ENCODE measurements at regions of chr3 and their contacts with region 1.

Region 1: DNA sequence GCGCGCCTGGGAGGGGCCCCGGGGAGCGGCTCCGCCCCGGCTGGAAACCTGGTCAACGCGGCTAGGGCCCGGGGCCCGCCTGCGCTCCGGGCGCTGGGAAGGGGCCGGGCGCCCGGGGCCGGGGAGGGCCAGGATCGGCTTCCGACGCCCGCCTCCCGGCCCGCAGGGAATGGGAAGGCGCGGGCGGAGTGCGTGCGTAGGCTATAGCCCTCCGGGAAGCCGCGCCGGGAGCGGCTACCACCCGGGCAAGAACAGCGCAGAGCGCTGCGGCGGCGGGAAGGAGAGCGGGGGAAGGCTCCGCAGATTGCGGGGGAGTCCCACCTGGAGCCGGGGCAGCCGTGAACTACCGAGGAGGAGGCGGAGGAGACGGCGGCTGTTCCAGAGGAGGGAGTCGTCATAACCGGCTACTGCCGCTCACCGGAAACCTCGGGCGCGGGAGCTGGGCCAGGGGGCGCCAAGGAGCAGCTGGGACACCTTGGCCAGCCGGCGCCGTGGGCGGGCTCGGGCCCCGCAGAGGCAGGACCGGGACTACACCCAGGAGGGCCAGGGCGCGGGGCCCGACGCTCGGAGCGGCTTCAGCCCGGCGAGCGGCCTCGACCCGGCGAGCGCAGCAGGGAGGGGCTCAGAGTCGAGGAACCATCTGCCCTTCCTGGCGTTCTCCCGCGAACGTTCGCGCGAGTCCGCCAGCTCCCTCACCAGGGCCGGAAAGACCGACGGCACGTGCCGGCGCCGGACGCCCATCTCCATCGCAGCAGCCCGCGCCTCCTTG is at the start of gene EOGT:
- DNase-seq: peak in 1 of 2 donors; percentile 93
- H3K4me3 ChIP-seq: peak within 1 kb of the TSS; percentile 69 to 76
- H3K27ac ChIP-seq: peak within 1 kb of the TSS; percentile 96
- H3K4me1 ChIP-seq: no peaks in the 10 kb centered on the region
- H3K27me3 ChIP-seq: no peaks in the 10 kb centered on the region
- CTCF ChIP-seq: peak in 2 of 3 experiments; percentile 19 to 48
- POLR2A ChIP-seq: no peak
- total RNA-seq, gene EOGT: 31.7 TPM

Region 2: DNA sequence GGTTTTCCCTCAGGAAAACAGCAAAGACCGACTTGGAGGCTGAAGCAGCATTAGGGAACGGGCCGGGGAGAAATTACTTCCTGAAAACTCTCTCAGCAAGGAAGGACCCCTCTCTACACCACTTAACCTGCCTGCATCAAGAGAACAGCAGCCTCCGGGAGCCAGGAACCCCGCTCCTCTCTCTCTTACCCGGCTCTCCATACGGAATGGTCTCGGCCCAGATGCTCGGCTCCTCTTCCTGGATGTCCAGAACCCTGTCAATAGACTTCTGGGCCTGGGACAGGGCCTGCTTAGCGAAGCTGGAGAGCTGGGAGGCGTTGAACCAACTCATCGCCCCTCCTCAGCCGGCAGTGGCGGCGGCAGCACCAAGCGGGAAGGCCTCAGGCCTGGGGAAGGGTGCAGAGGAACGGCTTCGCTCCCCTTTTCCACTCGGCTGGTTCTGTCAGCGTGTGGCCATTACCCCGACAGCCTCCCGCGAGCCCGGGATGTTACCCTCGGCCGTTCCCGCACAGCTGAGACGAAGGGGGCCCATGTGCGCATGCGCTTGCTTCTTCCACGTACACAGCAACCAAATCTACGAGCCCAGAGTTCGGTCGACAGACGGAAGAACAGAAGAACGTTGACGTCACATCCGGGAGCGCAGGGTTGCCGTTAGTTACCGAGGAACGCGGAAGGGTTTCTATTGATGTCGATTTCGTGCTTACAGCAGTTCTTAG is 38.5 kb after region 1 on chr3 and contains the start of gene TMF1:
- intact Hi-C with region 1: loop called (anchors 2 kb)
- DNase-seq: peak; percentile 98 to 99
- H3K4me3 ChIP-seq: peak within 1 kb of the TSS; percentile 78 to 79
- H3K27ac ChIP-seq: peak within 1 kb of the TSS; percentile 94
- H3K4me1 ChIP-seq: peaks cover 42% of the 10 kb centered on the region
- H3K27me3 ChIP-seq: no peaks in the 10 kb centered on the region
- CTCF ChIP-seq: no peak
- POLR2A ChIP-seq: peak in 1 of 2 donors; percentile 83
- total RNA-seq, gene TMF1: 34.4 TPM

Region 3: DNA sequence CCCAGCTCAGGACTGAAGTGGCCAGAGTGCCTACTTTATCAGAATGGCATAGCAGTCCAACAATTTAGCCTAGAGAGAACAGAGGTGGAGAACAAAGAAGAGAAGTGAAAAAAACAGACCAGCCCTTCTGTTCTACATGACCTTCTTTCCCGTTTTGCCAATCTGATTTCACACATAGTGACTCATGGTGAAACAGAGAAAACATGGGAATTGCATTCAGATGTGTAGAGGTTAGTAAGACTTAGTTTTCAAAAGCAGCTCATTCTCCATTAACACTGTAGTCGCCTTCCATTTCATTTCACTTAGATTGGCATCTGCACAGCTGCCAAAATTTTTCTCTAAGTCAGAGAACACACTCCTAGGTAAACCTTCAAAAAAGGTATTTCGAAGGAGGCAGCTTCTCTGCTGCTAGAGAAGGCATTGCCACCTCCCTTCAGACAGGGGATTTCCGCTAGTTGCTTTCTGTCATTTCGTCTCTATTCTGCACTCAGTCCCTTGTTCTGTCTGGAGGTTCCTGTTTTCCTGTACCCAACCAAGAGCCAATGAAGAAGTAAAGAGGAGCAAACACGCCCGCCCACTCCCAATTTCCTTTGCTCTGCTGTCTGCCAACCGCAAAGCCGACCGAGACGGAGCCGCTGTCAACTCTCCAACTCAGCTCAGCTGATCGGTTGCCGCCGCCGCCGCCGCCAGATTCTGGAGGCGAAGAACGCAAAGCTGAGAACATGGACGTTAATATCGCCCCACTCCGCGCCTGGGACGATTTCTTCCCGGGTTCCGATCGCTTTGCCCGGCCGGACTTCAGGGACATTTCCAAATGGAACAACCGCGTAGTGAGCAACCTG is 71.1 kb after region 1 on chr3 and contains the start of gene ARL6IP5:
- intact Hi-C with region 1: loop called (anchors 5 kb)
- DNase-seq: peak in 1 of 2 donors; percentile 94
- H3K4me3 ChIP-seq: peak within 1 kb of the TSS; percentile 69 to 89
- H3K27ac ChIP-seq: peak within 1 kb of the TSS; percentile 88
- H3K4me1 ChIP-seq: peaks cover 62% of the 10 kb centered on the region
- H3K27me3 ChIP-seq: no peaks in the 10 kb centered on the region
- CTCF ChIP-seq: no peak
- POLR2A ChIP-seq: no peak
- total RNA-seq, gene ARL6IP5: 86.9 TPM

Measured in vagina (tissue), 2 donors.